Calu3 (cell line): ENCODE measurements at regions of chr1 and their contacts with region 1.

Region 1: GRCh38 chr1:109331113-109331512 is 24.3 kb upstream of the MYBPHL start:
- DNase-seq: no peak
- H3K4me3 Mint-ChIP-seq: no peak overlapping the region
- H3K27ac Mint-ChIP-seq: no peak overlapping the region
- H3K4me1 Mint-ChIP-seq: no peaks in the 10 kb centered on the region
- H3K27me3 Mint-ChIP-seq: no peaks in the 10 kb centered on the region
- CTCF ChIP-seq: no peak

Region 2: DNA sequence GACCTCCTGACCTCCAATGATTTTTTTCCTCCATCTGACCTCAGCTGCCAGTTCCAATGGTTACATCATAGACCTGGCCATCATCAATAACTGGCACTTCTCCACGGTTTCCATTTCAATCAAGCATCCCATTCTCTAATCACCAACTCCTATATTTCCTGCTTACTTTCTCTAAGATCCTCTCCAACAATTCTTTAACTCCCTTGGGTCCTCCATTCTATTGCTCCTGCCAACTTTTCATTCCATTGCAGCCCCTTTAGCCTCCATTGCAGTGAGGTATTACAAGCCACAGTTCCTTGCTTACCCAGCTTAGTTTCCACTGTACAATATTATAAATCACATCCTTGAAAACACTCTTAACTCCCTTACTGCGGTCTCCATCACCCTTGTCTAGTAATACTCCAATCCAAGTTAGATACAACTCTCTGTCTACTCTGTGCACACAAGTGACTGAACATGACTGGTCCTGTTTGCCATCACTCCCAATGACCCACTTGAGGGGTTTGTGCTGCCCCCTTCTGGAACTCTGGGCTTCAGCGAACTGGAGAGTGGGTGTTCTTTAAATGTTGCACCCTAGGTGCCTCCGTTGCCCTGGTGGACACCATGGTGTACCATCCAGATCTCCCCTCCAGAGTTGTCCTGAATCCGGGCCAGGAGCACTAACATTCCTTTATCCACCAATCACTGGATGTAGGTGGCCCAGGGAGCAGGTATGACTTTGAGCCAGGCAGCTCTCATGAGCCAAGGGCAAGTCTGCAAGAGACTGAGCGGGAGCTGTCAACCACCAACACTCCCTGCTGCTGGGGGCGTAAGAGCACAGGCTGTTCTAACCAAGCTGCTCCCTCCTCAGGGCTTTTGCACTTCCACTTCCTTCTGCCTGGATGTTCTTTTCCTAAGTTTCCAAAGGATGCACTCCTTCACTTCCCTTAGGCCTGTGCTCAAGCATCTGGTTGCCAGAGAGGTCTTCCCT is 622.1 kb before region 1 on chr1:
- CTCF ChIA-PET with region 1: no interaction called
- intact Hi-C with region 1: no loop called
- DNase-seq: no peak
- H3K4me3 Mint-ChIP-seq: no peak overlapping the region
- H3K27ac Mint-ChIP-seq: no peak overlapping the region
- H3K4me1 Mint-ChIP-seq: no peaks in the 10 kb centered on the region
- H3K27me3 Mint-ChIP-seq: no peaks in the 10 kb centered on the region
- CTCF ChIP-seq: no peak

Region 3: GRCh38 chr1:109282952-109283747 is 48.0 kb before region 1 on chr1 and contains the start of gene PSRC1:
- CTCF ChIA-PET with region 1: no interaction called
- intact Hi-C with region 1: loop called (anchors 10 kb)
- DNase-seq: peak; percentile 94
- H3K4me3 Mint-ChIP-seq: peak within 1 kb of the TSS; percentile 87
- H3K27ac Mint-ChIP-seq: peak within 1 kb of the TSS; percentile 47
- H3K4me1 Mint-ChIP-seq: no peaks in the 10 kb centered on the region
- H3K27me3 Mint-ChIP-seq: no peaks in the 10 kb centered on the region
- CTCF ChIP-seq: no peak
- total RNA-seq, gene PSRC1: 17.1 and 21.3 TPM in 2 replicates

Region 4: DNA sequence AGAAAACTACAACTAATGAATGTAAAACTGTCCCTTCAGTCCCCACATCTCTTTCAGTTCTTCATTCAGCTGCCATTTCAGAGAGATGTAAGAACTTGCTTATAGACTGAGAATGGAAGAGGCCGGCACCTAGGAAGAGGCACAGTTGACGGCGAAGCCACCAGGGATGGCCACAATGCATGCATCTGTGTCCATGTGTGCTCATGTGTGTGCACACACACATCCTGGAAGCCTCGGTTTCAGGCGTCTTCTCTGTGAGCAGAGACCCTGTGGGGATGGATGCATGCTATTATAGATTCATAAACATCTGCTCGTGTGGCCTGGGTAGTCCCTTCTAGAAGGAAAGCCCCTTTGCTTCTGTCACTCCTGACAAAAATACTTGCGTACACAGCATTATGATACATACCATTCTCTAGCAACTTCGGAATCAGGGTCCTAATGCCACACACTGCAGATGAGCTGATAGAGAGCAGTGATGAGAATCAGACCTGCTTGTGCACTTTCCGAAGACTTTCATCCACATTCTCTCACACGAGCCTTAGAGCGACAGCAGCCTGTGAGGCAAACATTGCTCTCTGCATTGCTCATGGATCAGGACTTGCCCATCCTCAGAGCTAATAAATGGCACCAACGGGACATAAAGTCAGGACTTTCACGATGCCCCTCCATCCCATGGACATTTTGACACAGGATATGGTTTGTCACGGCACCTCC is 196.1 kb after region 1 on chr1:
- CTCF ChIA-PET with region 1: no interaction called
- intact Hi-C with region 1: no loop called
- DNase-seq: no peak
- H3K4me3 Mint-ChIP-seq: no peak overlapping the region
- H3K27ac Mint-ChIP-seq: no peak overlapping the region
- H3K4me1 Mint-ChIP-seq: no peaks in the 10 kb centered on the region
- H3K27me3 Mint-ChIP-seq: peaks cover 81% of the 10 kb centered on the region
- CTCF ChIP-seq: no peak